Endothelial cell of umbilical vein (primary cell): ENCODE measurements at regions of chr5 and their contacts with region 1.

Region 1: DNA sequence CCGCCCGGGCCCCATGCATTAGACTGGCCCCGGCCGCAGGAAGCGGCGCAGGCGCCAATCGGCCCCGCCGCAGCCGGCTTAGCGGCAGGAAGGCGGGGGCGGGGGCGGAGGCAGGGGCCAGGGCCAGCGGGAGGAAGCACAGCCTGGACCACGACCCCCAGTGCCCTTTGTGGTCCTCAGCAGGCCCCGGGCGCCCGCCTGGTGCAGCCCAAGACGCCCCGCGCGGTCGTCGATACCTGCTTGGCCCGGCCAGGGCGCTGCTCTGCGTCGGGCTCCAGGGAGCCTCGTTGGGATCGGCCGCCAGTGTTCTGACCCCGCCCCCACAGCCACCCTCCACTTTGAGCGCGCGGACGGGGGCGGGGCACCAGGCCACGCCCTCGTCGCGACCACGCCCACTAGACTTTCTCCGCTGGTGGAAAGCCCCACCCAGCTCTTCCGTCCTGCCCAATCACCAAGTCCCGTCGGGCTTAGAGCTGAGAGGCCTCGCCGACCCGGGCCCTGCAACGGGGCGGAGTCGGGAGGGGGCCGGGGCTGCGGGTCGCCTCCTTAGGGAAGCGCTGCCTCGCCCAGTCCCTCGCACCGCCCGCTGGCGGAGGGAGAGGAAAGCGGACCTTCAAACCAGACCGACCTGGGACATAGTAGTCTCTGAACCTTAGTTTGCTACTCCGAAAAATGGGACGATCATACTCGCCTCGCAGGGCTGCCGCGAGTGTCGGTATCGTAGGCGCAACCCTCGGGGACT is at the start of gene PDLIM7:
- DNase-seq: peak; percentile 98
- H3K4me3 ChIP-seq: peak within 1 kb of the TSS; percentile 47 to 79 (median 74)
- H3K27ac ChIP-seq: peak within 1 kb of the TSS; percentile 93
- H3K4me1 ChIP-seq: peaks cover 42% of the 10 kb centered on the region
- H3K27me3 ChIP-seq: no peaks in the 10 kb centered on the region
- CTCF ChIP-seq: no peak
- POLR2A ChIP-seq: peak; percentile 99
- total RNA-seq, gene PDLIM7: 318 and 371 TPM in 2 replicates

Region 2: GRCh38 chr5:176537608-176538504 is 959.6 kb before region 1 on chr5:
- CTCF ChIA-PET with region 1: no interaction called
- POLR2A ChIA-PET with region 1: no interaction called
- dilution Hi-C with region 1: no loop called
- intact Hi-C with region 1: loop called (anchors 10 kb)
- DNase-seq: peak; percentile 99
- H3K4me3 ChIP-seq: peak overlapping the region; percentile 68 to 79 (median 79)
- H3K27ac ChIP-seq: peak overlapping the region; percentile 83
- H3K4me1 ChIP-seq: peaks cover 59% of the 10 kb centered on the region
- H3K27me3 ChIP-seq: no peaks in the 10 kb centered on the region
- CTCF ChIP-seq: no peak
- POLR2A ChIP-seq: no peak

Region 3: GRCh38 chr5:176629853-176630712 is 867.4 kb before region 1 on chr5 and contains the starts of genes EIF4E1B and SNCB:
- CTCF ChIA-PET with region 1: no interaction called
- POLR2A ChIA-PET with region 1: no interaction called
- dilution Hi-C with region 1: no loop called
- intact Hi-C with region 1: no loop called
- DNase-seq: peak; percentile 49
- H3K4me3 ChIP-seq: peak within 1 kb of the TSS in 2 of 3 experiments; percentile 1 to 18
- H3K27ac ChIP-seq: no peak within 1 kb of the TSS
- H3K4me1 ChIP-seq: no peaks in the 10 kb centered on the region
- H3K27me3 ChIP-seq: peaks cover 59 to 61% of the 10 kb centered on the region in 2 experiments
- CTCF ChIP-seq: no peak
- POLR2A ChIP-seq: no peak
- total RNA-seq, gene EIF4E1B: not detected in 2 replicates
- total RNA-seq, gene SNCB: not detected in 2 replicates

Region 4: GRCh38 chr5:177390363-177391300 is 106.8 kb before region 1 on chr5:
- CTCF ChIA-PET with region 1: interaction called, 56 read pairs
- POLR2A ChIA-PET with region 1: no interaction called
- dilution Hi-C with region 1: no loop called
- intact Hi-C with region 1: loop called (anchors 1 kb)
- DNase-seq: peak; percentile 88
- H3K4me3 ChIP-seq: no peak overlapping the region
- H3K27ac ChIP-seq: no peak overlapping the region
- H3K4me1 ChIP-seq: no peaks in the 10 kb centered on the region
- H3K27me3 ChIP-seq: no peaks in the 10 kb centered on the region
- CTCF ChIP-seq: peak; percentile 90 to 92
- POLR2A ChIP-seq: no peak

Region 5: DNA sequence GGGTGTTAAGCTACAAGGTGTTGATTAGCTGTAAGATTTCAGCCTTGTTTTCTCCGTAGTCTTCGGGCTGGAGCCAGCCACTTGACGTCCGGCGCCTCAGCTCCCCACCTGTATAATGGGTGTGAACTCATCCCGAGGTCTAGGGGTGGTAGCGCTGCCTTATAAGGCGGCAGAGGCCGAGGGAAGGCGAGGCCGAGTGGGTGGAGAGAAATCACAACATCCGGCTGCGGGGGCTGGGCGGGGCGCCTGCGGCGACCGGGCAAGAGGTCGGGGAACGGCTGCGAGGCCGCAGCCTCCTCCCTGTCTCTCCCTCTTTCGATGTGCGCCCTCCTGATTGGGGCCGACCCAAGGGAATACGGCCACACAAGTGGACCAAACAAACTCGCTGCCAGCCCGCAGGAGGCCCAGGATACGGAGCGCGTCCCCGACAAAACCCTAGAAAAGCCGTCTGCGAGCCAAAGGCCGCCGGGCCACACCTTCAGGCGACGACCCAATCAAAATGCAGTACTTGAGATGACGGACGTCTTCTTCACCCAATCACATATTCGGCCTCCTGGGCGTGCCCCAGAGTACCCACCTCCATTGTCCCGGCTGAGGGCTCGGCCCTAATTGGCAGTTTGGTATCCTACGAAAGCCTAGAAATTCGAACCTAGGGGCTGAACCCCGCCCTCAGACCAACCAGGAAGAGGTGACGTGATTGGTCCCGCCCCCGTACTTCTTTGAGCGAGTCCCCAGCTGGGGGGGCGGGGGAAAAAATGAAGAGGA is 71.5 kb before region 1 on chr5:
- CTCF ChIA-PET with region 1: interaction called, 4 read pairs
- POLR2A ChIA-PET with region 1: interaction called, 4 read pairs
- dilution Hi-C with region 1: no loop called
- intact Hi-C with region 1: loop called (anchors 1 kb)
- DNase-seq: peak; percentile 100
- H3K4me3 ChIP-seq: peak overlapping the region; percentile 40 to 52 (median 51)
- H3K27ac ChIP-seq: peak overlapping the region; percentile 61
- H3K4me1 ChIP-seq: peaks cover 14% of the 10 kb centered on the region
- H3K27me3 ChIP-seq: no peaks in the 10 kb centered on the region
- CTCF ChIP-seq: no peak
- POLR2A ChIP-seq: peak; percentile 56

Region 6: GRCh38 chr5:177473461-177474001 is 23.9 kb before region 1 on chr5 and contains the start of gene DBN1:
- CTCF ChIA-PET with region 1: interaction called, 16 read pairs
- POLR2A ChIA-PET with region 1: interaction called, 17 read pairs
- dilution Hi-C with region 1: no loop called
- intact Hi-C with region 1: no loop called
- DNase-seq: peak; percentile 30
- H3K4me3 ChIP-seq: peak within 1 kb of the TSS; percentile 58 to 82 (median 72)
- H3K27ac ChIP-seq: peak within 1 kb of the TSS; percentile 42
- H3K4me1 ChIP-seq: peaks cover 31% of the 10 kb centered on the region
- H3K27me3 ChIP-seq: no peaks in the 10 kb centered on the region
- CTCF ChIP-seq: no peak
- POLR2A ChIP-seq: peak; percentile 33
- total RNA-seq, gene DBN1: 310 and 336 TPM in 2 replicates

Region 7: DNA sequence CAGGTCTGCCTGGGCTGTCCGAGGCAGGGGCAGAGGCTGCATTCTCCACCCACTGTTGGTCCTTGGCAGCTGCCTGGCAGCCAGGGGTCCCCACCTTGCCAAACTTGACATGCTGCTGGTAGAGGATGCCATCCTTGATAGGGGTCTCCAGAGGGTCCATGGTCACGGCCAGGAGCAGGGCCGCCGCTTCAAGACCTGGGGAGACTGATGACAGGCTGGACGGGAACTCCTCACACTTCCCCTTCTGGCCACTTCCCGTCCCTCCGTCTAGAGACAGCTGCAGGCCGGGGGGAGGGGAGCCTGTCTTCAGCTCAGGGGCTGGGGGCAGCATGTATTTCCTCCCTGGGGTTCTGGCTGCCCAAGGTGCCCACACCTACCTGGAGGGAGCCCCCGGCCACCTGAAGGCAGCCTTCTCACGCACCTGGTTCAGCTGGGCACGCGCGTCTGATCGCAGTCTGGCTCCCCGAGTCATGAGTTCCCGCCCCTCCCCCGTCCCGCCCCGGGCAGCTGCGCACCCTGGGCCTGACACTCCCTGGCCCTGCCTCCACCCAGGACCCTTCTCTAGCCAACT is 12.0 kb after region 1 on chr5 and contains the start of gene DOK3:
- CTCF ChIA-PET with region 1: interaction called, 22 read pairs
- POLR2A ChIA-PET with region 1: interaction called, 15 read pairs
- dilution Hi-C with region 1: no loop called
- intact Hi-C with region 1: loop called (anchors 1 kb)
- DNase-seq: peak; percentile 21
- H3K4me3 ChIP-seq: peak within 1 kb of the TSS in 1 of 3 experiments; percentile 7
- H3K27ac ChIP-seq: no peak within 1 kb of the TSS
- H3K4me1 ChIP-seq: peaks cover 9% of the 10 kb centered on the region
- H3K27me3 ChIP-seq: no peaks in the 10 kb centered on the region
- CTCF ChIP-seq: no peak
- POLR2A ChIP-seq: no peak
- total RNA-seq, gene DOK3: 5.3 and 8.1 TPM in 2 replicates

Region 8: GRCh38 chr5:177546258-177546741 is 48.8 kb after region 1 on chr5:
- CTCF ChIA-PET with region 1: interaction called, 3 read pairs
- POLR2A ChIA-PET with region 1: no interaction called
- dilution Hi-C with region 1: no loop called
- intact Hi-C with region 1: loop called (anchors 2 kb)
- DNase-seq: peak; percentile 87
- H3K4me3 ChIP-seq: no peak overlapping the region
- H3K27ac ChIP-seq: peak overlapping the region; percentile 52
- H3K4me1 ChIP-seq: peaks cover 15% of the 10 kb centered on the region
- H3K27me3 ChIP-seq: no peaks in the 10 kb centered on the region
- CTCF ChIP-seq: no peak
- POLR2A ChIP-seq: no peak

Region 9: GRCh38 chr5:178826216-178826615 is 1328.8 kb after region 1 on chr5:
- CTCF ChIA-PET with region 1: no interaction called
- POLR2A ChIA-PET with region 1: no interaction called
- dilution Hi-C with region 1: no loop called
- intact Hi-C with region 1: no loop called
- DNase-seq: no peak
- H3K4me3 ChIP-seq: no peak overlapping the region
- H3K27ac ChIP-seq: no peak overlapping the region
- H3K4me1 ChIP-seq: no peaks in the 10 kb centered on the region
- H3K27me3 ChIP-seq: no peaks in the 10 kb centered on the region
- CTCF ChIP-seq: no peak
- POLR2A ChIP-seq: no peak